ENCODE measurements at regions of chr2 and their contacts with region 1.

Region 1: GRCh38 chr2:50143822-50144575 is 887.9 kb downstream of the NRXN1 start:
- DNase-seq: peak; percentile 41
- H3K4me3 ChIP-seq: peak overlapping the region; percentile 32 to 44 (median 35)
- H3K27ac ChIP-seq: no peak overlapping the region
- H3K4me1 ChIP-seq: no peaks in the 10 kb centered on the region
- H3K27me3 ChIP-seq: peaks cover 2% of the 10 kb centered on the region
- CTCF ChIP-seq: peak; percentile 57 to 67

Region 2: DNA sequence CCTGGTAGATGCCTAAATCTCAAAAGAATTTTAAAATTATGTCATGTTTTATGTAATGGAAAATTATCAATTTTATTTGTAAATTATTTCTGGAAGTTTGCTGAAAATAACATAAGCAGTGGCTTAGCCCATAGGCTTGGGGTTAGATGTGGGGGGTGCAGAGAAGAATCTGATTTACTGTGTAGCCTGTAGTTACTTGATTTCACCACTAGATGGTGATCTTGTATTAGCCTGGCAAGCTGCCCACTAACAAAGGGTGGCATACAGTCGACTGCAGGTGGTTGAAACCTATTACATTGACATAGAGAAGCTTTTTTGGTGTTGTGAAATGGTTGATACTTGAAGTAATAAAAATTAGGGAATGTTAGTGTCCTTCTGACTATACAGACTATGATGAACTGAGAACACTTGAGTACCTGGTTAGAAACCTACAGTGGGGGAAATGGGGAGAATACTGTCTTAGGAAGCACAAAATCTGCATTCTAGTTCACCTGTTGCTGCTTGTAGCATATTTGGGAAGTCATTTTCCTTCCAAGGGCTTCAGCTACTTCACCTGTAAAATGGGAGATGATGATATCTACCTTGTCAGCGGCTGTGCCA is 1197.5 kb before region 1 on chr2:
- CTCF ChIA-PET with region 1: no interaction called
- dilution Hi-C with region 1: no loop called
- in situ Hi-C with region 1: no loop called
- intact Hi-C with region 1: loop called (anchors 1 kb)
- DNase-seq: peak; percentile 30
- H3K4me3 ChIP-seq: no peak overlapping the region
- H3K27ac ChIP-seq: no peak overlapping the region
- H3K4me1 ChIP-seq: no peaks in the 10 kb centered on the region
- H3K27me3 ChIP-seq: no peaks in the 10 kb centered on the region
- CTCF ChIP-seq: peak; percentile 78 to 80

Region 3: GRCh38 chr2:49616800-49617199 is 527.2 kb before region 1 on chr2:
- CTCF ChIA-PET with region 1: no interaction called
- dilution Hi-C with region 1: no loop called
- in situ Hi-C with region 1: no loop called
- intact Hi-C with region 1: loop called (anchors 2 kb)
- DNase-seq: peak; percentile 16
- H3K4me3 ChIP-seq: no peak overlapping the region
- H3K27ac ChIP-seq: no peak overlapping the region
- H3K4me1 ChIP-seq: no peaks in the 10 kb centered on the region
- H3K27me3 ChIP-seq: no peaks in the 10 kb centered on the region
- CTCF ChIP-seq: peak; percentile 37 to 59

Region 4: GRCh38 chr2:49770919-49771318 is 373.1 kb before region 1 on chr2:
- CTCF ChIA-PET with region 1: no interaction called
- dilution Hi-C with region 1: no loop called
- in situ Hi-C with region 1: no loop called
- intact Hi-C with region 1: loop called (anchors 1 kb)
- DNase-seq: peak; percentile 31
- H3K4me3 ChIP-seq: no peak overlapping the region
- H3K27ac ChIP-seq: no peak overlapping the region
- H3K4me1 ChIP-seq: no peaks in the 10 kb centered on the region
- H3K27me3 ChIP-seq: no peaks in the 10 kb centered on the region
- CTCF ChIP-seq: peak; percentile 47 to 65